MCF 10A (cell line): ENCODE measurements at regions of chr5 and their contacts with region 1.

Region 1: DNA sequence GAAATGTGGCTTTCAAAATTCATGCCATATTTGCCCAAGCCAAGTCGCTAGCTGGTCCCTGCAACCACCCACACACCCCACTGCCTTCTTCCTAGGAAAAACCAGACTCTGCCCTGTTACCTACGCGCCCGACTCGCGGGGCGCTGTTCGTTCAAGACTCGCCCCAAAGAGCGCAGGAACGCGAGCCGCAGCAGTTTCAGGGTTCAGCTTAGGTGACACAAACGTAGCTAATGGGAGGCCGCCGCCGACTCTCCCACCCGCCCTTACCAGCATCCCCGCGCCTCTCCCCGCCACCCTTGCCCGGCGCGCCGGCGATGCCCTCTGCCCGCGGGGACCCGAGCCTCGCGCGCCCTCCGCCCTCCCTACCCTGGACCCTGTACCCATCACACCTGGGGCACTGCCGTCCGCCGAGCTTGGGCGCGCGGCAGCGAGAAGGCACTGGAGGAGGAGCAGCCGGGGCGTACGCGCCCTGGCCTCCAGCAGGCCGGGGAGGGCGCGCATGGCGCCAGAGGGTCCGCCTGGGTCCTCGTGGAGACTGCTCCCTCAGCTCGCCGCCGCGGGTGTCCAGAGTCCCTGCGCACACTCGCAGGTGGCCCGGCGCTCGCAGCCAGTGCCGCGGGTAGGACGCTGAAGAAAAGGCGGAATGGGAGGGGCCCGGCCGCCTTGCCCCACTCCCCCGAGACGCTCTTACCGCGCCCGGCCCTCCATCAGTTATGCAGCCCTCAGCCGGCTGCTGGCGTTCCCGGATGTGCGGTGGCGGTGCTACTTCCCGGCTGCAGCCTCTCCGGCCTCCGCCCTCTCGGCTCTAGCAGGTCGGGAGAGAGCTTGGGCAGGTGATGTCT is at the start of gene EMB:
- DNase-seq: peak; percentile 75
- H3K4me3 Mint-ChIP-seq: peak within 1 kb of the TSS; percentile 86
- H3K27ac Mint-ChIP-seq: peak within 1 kb of the TSS; percentile 81
- H3K4me1 Mint-ChIP-seq: peaks cover 20% of the 10 kb centered on the region
- H3K27me3 Mint-ChIP-seq: no peaks in the 10 kb centered on the region
- CTCF ChIP-seq: peak; percentile 27
- total RNA-seq, gene EMB: 27.7 and 31.2 TPM in 2 replicates

Region 2: GRCh38 chr5:50365426-50366251 is 75.2 kb before region 1 on chr5:
- CTCF ChIA-PET with region 1: no interaction called
- POLR2A ChIA-PET with region 1: no interaction called
- intact Hi-C with region 1: no loop called
- DNase-seq: no peak
- H3K4me3 Mint-ChIP-seq: no peak overlapping the region
- H3K27ac Mint-ChIP-seq: no peak overlapping the region
- H3K4me1 Mint-ChIP-seq: no peaks in the 10 kb centered on the region
- H3K27me3 Mint-ChIP-seq: no peaks in the 10 kb centered on the region
- CTCF ChIP-seq: no peak

Region 3: GRCh38 chr5:50420146-50420935 is 20.5 kb before region 1 on chr5:
- CTCF ChIA-PET with region 1: interaction called, 8 read pairs
- POLR2A ChIA-PET with region 1: interaction called, 12 read pairs
- intact Hi-C with region 1: no loop called
- DNase-seq: no peak
- H3K4me3 Mint-ChIP-seq: no peak overlapping the region
- H3K27ac Mint-ChIP-seq: no peak overlapping the region
- H3K4me1 Mint-ChIP-seq: peaks cover 19% of the 10 kb centered on the region
- H3K27me3 Mint-ChIP-seq: no peaks in the 10 kb centered on the region
- CTCF ChIP-seq: no peak